Natural killer cell (primary cell): ENCODE measurements at regions of chr22 and their contacts with region 1.

Region 1: DNA sequence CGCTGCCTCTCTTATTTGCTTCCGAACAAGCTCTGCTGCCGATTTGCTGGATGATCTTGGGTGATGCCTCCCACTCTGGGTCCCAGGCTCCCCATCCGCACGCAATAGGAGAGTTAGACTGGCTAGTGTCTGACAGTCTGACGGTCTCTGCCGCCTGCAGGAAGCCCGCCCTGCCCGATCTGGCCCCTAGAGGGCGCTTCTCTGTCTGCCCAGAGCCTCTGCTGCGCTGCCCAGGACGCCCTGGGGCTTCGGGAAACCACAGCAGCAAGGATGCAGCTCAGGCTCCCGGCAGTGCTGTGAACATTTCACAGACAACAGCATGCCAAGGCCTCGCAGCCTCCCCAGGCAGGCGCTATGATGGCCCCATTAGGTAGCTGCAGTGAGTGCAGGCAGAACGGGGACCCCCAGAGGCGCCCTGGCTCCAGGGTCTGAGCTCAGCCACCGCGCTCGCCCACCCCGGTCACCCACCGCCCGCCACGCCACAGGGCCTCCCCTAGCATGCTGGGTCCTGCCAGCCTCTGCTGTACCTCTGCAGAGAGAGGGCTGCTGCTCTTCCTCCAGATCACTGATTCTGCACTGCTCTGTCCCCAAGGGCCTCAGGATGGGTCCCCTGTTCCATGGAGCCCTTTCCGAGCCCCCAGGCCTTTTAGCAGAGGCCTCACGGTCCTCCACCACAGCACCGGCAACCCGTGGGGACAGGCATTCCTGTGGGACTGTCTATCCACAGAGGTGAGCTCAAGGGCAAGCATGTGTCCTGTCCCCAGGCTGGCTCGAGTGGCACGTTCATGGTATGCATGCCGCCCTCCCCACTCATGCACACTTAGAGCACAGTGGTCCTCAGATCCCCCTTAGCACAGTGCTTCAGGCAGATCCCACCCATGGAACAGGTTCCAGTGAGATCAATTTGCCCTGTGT is 4.3 kb upstream of the BAIAP2L2 start:
- DNase-seq: peak; percentile 82 to 83
- ATAC-seq: peak; percentile 88 to 96 (median 95)
- H3K4me3 ChIP-seq: no peak overlapping the region
- H3K4me3 Mint-ChIP-seq: peak overlapping the region; percentile 50
- H3K27ac ChIP-seq: no peak overlapping the region
- H3K27ac Mint-ChIP-seq: peak overlapping the region; percentile 47 to 65
- H3K4me1 ChIP-seq: peaks cover 11% of the 10 kb centered on the region
- H3K4me1 Mint-ChIP-seq: peaks cover 8 to 18% of the 10 kb centered on the region in 2 donors
- H3K27me3 ChIP-seq: no peaks in the 10 kb centered on the region
- H3K27me3 Mint-ChIP-seq: no peaks in the 10 kb centered on the region
- CTCF ChIP-seq: peak; percentile 86

Region 2: GRCh38 chr22:37979782-37980181 is 135.0 kb before region 1 on chr22:
- intact Hi-C with region 1: no loop called
- DNase-seq: no peak
- ATAC-seq: no peak
- H3K4me3 ChIP-seq: no peak overlapping the region
- H3K4me3 Mint-ChIP-seq: no peak overlapping the region
- H3K27ac ChIP-seq: no peak overlapping the region
- H3K27ac Mint-ChIP-seq: no peak overlapping the region
- H3K4me1 ChIP-seq: no peaks in the 10 kb centered on the region
- H3K4me1 Mint-ChIP-seq: peaks cover 9 to 23% of the 10 kb centered on the region in 2 donors
- H3K27me3 ChIP-seq: no peaks in the 10 kb centered on the region
- H3K27me3 Mint-ChIP-seq: no peaks in the 10 kb centered on the region
- CTCF ChIP-seq: no peak

Region 3: DNA sequence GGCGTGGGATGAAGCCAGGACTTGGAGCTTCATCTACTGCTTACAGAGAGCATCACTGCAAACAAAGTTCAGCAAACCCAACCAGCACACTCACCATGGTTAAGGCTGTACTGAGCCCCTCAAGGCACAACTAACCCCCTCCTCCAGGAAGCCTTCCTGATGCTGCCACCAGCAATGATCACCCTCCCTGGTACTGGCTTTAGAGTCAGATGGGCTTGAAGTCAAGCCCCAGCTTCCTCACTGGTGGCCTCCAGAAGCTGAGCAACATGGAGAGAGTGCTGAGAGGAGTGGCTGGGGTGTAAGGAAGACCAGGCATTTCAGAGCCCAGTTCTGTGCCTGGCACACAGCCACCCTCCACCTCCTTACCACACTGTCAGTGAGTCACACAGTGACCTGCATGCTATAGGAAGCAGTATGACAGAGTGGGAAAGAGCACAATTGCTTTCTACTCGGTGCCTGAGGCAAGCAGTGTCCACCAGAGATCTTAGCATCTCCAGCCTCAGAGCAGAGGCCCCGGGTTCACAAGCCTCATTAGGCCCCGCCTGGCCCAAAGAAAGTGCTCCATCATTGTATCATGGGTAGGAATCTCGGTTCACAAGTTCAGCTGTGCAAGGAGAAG is 20.5 kb after region 1 on chr22:
- intact Hi-C with region 1: no loop called
- DNase-seq: no peak
- ATAC-seq: no peak
- H3K4me3 ChIP-seq: no peak overlapping the region
- H3K4me3 Mint-ChIP-seq: no peak overlapping the region
- H3K27ac ChIP-seq: no peak overlapping the region
- H3K27ac Mint-ChIP-seq: peak overlapping the region; percentile 11 to 33
- H3K4me1 ChIP-seq: peaks cover 11% of the 10 kb centered on the region
- H3K4me1 Mint-ChIP-seq: peaks cover 9 to 14% of the 10 kb centered on the region in 2 donors
- H3K27me3 ChIP-seq: no peaks in the 10 kb centered on the region
- H3K27me3 Mint-ChIP-seq: no peaks in the 10 kb centered on the region
- CTCF ChIP-seq: no peak

Region 4: DNA sequence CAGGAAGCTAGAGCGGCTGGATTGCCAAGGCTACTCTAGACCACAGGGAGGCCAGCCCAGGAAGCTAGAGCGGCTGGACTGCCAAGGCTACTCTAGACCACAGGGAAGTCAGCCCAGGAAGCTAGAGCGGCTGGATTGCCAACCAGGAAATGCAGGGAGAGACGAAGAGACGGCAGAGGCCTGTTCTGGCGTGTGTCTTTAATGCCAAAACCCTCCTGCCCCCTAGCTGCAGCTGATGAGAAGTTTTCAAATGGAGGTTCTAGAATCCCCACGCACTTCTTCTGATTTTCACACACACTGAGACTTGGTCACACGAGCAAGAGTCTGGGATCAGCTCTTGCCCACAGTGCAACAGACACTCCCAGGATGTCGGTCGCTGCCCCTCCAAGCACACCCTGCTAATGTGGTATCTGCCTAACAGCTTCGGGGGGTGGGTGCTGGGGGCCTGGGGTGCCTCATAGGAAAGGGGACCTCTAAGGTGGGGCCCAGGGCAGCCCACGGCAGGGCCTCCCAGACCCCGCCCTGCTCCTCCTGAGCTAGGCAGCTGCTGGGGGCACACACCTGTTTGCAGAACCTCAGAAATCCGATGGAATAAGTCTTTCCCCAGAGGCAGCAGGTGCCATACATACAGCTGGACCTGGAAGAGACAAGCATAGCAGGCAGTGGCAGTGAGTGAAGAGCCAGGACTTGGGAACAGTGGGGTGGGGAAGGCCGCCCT is 115.5 kb after region 1 on chr22:
- intact Hi-C with region 1: loop called (anchors 1 kb)
- DNase-seq: peak; percentile 60 to 71
- ATAC-seq: peak; percentile 83 to 86 (median 86)
- H3K4me3 ChIP-seq: no peak overlapping the region
- H3K4me3 Mint-ChIP-seq: peak overlapping the region; percentile 17
- H3K27ac ChIP-seq: peak overlapping the region; percentile 76
- H3K27ac Mint-ChIP-seq: peak overlapping the region; percentile 90 to 92
- H3K4me1 ChIP-seq: peaks cover 35% of the 10 kb centered on the region
- H3K4me1 Mint-ChIP-seq: peaks cover 20 to 35% of the 10 kb centered on the region in 2 donors
- H3K27me3 ChIP-seq: no peaks in the 10 kb centered on the region
- H3K27me3 Mint-ChIP-seq: no peaks in the 10 kb centered on the region
- CTCF ChIP-seq: peak; percentile 60